Dendritic cell treated with granulocyte-macrophage colony-stimulating factor and Interleukin-4, amounts not matched to agents 40 ng/mL and 50 ng/mL, for 4 days (primary cell): ENCODE measurements at regions of chr7 and their contacts with region 1.

Region 1: DNA sequence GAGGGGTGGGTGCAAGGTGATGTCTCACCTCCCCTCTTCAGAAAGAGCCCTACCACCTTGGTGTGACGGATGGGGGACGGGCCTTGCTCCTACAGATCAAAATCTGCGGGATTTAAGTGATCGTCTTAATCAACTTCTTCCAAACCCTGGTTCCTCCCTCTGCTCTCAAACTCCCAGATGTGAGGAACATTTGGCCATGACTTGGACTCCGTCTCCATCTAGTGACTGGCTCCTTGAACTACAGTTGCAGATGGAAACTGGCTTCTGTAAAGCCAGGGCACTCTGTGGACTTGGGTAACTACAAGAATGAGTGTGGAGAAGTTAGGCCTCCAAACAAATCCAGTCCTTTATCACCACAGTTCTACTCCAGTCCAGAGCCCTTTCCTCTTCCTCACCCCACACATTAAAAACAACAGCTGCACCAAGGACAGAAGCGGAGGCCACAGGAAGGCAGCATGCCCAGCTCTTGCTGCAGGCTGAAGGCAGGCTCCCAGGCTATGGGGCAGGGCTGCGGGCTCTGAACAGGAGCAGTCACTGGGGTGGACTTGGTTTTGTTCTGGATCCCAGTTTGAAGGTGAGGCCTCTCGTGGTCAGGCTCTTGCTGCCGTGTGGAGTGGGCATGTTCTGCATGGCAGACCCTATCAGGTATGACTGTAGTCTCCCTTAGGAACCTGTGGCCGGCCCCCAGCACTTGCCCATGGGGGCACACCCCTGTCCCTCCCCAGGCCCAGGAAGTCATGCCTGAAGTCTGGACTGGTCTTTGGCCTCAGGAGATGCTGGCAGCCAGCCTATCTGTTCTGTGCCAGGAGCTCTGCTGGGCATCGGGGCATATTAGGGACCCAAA is 79.4 kb downstream of the VWC2 start:
- H3K4me3 Mint-ChIP-seq: no peak overlapping the region
- H3K27ac Mint-ChIP-seq: no peak overlapping the region
- H3K4me1 Mint-ChIP-seq: no peaks in the 10 kb centered on the region
- H3K27me3 Mint-ChIP-seq: no peaks in the 10 kb centered on the region

Region 2: GRCh38 chr7:49001610-49002033 is 851.2 kb before region 1 on chr7:
- intact Hi-C with region 1: loop called (anchors 5 kb)
- H3K4me3 Mint-ChIP-seq: no peak overlapping the region
- H3K27ac Mint-ChIP-seq: no peak overlapping the region
- H3K4me1 Mint-ChIP-seq: no peaks in the 10 kb centered on the region
- H3K27me3 Mint-ChIP-seq: peaks cover 11% of the 10 kb centered on the region

Region 3: GRCh38 chr7:49483142-49483541 is 369.7 kb before region 1 on chr7:
- intact Hi-C with region 1: loop called (anchors 5 kb)
- H3K4me3 Mint-ChIP-seq: no peak overlapping the region
- H3K27ac Mint-ChIP-seq: no peak overlapping the region
- H3K4me1 Mint-ChIP-seq: no peaks in the 10 kb centered on the region
- H3K27me3 Mint-ChIP-seq: no peaks in the 10 kb centered on the region

Region 4: GRCh38 chr7:49791088-49791741 is 61.6 kb before region 1 on chr7:
- intact Hi-C with region 1: no loop called
- H3K4me3 Mint-ChIP-seq: no peak overlapping the region
- H3K27ac Mint-ChIP-seq: no peak overlapping the region
- H3K4me1 Mint-ChIP-seq: no peaks in the 10 kb centered on the region
- H3K27me3 Mint-ChIP-seq: peaks cover 3% of the 10 kb centered on the region